ENCODE measurements at regions of chr10 and their contacts with region 1.

Region 1: GRCh38 chr10:120942806-120943413 is 91.7 kb downstream of the WDR11 start:
- DNase-seq: peak; percentile 67
- H3K4me3 ChIP-seq: no peak overlapping the region
- H3K27ac ChIP-seq: no peak overlapping the region
- H3K4me1 ChIP-seq: peaks cover 15% of the 10 kb centered on the region
- H3K27me3 ChIP-seq: no peaks in the 10 kb centered on the region
- CTCF ChIP-seq: peak; percentile 80 to 92

Region 2: DNA sequence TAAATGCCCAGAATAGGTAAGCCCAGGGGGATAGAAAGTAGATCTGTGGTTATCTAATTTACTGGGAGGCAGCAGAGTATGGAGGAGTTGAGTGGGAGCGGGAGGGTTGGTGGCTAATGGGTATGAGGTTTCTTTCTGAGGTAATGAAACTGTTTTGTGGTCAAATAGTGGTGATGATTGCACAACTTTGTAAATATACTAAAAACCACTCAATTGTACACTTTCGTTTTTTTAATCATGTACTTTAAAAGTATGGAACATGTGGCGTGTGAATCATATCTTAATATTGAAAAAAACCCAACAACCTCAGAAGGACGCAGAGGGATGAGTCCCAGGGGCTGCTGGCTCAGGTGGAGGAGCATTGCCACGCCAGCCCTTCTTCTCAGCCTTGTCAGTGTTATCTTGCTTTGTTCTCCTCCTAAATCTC is 26.3 kb after region 1 on chr10:
- CTCF ChIA-PET with region 1: no interaction called
- dilution Hi-C with region 1: no loop called
- in situ Hi-C with region 1: no loop called
- intact Hi-C with region 1: no loop called
- DNase-seq: peak; percentile 88
- H3K4me3 ChIP-seq: no peak overlapping the region
- H3K27ac ChIP-seq: no peak overlapping the region
- H3K4me1 ChIP-seq: peaks cover 14% of the 10 kb centered on the region
- H3K27me3 ChIP-seq: peaks cover 32% of the 10 kb centered on the region
- CTCF ChIP-seq: no peak

Region 3: DNA sequence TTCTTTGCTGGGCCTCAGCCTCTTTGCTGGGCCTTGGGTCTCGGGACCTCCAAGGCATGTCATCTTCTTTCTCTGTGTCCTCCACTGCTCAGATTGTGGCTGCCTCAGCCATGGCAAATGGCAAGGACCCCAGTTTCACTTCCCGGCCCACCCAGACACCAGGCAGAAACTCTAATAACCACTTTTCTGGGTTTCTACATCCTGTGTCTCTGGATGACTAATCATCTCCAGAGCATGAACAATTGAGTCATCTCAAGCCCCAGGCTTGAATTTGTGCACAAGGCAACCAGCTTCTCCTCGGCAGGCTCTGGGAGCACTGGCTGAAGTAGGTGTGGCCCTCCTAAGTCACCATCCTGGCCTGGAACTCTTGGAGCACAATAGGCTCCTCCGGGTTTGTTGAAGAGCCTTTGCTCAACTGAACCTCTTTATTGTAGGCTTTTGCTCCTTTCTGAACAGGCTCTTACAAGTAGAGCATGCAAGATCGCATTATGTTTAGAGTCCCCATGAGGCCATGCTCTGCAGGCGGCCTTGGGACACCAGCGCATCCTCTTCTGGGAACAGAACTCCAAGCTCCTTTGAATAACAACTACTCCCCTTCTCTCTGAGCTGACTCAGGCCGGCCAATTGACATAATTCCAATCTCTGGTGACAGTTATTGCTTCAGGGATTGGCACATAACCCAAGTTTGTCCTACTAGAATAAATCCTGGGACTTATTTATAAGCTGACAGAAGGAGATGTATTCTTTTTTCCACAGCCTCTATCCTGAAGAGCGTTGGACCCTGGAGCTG is 126.3 kb after region 1 on chr10:
- CTCF ChIA-PET with region 1: no interaction called
- dilution Hi-C with region 1: no loop called
- in situ Hi-C with region 1: no loop called
- intact Hi-C with region 1: no loop called
- DNase-seq: peak; percentile 98
- H3K4me3 ChIP-seq: no peak overlapping the region
- H3K27ac ChIP-seq: peak overlapping the region; percentile 86
- H3K4me1 ChIP-seq: peaks cover 20% of the 10 kb centered on the region
- H3K27me3 ChIP-seq: no peaks in the 10 kb centered on the region
- CTCF ChIP-seq: no peak

Region 4: DNA sequence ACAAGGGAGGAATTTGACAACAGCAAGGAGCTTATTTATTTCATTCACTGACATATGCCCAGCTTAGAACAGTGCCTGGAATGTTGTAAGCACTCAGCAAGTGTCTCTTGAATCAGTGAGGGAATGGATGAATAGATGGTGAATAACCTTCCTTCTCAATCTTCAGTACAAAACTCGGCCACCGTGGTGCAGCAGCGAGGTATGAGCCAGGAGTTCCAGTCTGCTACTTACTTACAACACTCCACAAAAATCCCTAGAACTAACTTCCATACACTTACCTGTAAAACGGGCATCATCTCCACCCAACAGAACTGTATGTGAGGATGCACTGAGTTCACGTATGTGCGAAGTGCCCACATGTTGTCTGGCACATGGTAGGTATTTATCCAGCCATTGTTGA is 145.6 kb after region 1 on chr10:
- CTCF ChIA-PET with region 1: no interaction called
- dilution Hi-C with region 1: no loop called
- in situ Hi-C with region 1: no loop called
- intact Hi-C with region 1: loop called (anchors 1 kb)
- DNase-seq: peak; percentile 68
- H3K4me3 ChIP-seq: no peak overlapping the region
- H3K27ac ChIP-seq: no peak overlapping the region
- H3K4me1 ChIP-seq: peaks cover 12% of the 10 kb centered on the region
- H3K27me3 ChIP-seq: no peaks in the 10 kb centered on the region
- CTCF ChIP-seq: peak; percentile 67 to 75

Region 5: GRCh38 chr10:121392657-121393056 is 449.7 kb after region 1 on chr10:
- CTCF ChIA-PET with region 1: no interaction called
- dilution Hi-C with region 1: no loop called
- in situ Hi-C with region 1: no loop called
- intact Hi-C with region 1: loop called (anchors 5 kb)
- DNase-seq: no peak
- H3K4me3 ChIP-seq: peak overlapping the region in 2 of 3 experiments; percentile 13 to 26
- H3K27ac ChIP-seq: no peak overlapping the region
- H3K4me1 ChIP-seq: no peaks in the 10 kb centered on the region
- H3K27me3 ChIP-seq: no peaks in the 10 kb centered on the region
- CTCF ChIP-seq: peak; percentile 8 to 24

Region 6: DNA sequence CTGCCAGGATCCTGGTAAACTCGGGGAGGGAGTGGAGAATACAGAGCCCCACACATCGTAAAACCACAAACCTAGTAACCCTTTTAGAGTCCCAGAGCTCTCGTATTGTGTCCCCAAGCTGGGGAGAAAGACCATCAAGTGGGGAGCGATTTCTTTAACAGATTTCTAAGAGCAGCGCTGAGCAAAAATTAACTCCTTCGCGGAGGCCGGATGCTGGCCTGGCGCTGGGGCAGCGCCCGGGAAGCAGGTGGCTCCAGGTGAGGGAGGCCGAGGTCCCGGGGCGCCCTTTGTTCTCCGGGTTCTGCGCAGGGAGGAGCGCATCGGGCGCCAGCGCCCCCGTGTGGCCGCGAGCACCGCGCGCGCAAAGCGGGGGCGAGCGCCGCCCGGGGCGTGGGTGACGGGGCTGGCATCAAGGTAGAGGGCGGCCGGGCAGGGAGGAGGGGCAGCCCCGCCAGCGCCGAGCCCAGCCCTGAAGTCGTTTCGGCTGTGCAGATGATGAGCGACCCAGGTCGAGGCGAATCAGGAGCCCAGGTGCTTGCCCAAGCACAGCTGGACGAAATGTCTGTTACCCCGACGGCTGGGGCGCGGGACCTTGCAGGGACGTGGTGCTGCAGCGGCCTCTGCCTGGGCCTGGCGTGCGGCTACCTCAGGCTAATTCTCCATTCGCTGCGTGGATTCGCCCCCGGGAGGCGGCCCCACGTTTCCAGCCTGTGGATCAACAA is 665.7 kb after region 1 on chr10:
- CTCF ChIA-PET with region 1: no interaction called
- dilution Hi-C with region 1: no loop called
- in situ Hi-C with region 1: loop called in 1 of 2 experiments (anchors 25 kb)
- intact Hi-C with region 1: loop called (anchors 1 kb)
- DNase-seq: peak; percentile 49
- H3K4me3 ChIP-seq: peak overlapping the region in 2 of 3 experiments; percentile 21 to 33
- H3K27ac ChIP-seq: no peak overlapping the region
- H3K4me1 ChIP-seq: peaks cover 25% of the 10 kb centered on the region
- H3K27me3 ChIP-seq: no peaks in the 10 kb centered on the region
- CTCF ChIP-seq: peak; percentile 61 to 78

Region 7: DNA sequence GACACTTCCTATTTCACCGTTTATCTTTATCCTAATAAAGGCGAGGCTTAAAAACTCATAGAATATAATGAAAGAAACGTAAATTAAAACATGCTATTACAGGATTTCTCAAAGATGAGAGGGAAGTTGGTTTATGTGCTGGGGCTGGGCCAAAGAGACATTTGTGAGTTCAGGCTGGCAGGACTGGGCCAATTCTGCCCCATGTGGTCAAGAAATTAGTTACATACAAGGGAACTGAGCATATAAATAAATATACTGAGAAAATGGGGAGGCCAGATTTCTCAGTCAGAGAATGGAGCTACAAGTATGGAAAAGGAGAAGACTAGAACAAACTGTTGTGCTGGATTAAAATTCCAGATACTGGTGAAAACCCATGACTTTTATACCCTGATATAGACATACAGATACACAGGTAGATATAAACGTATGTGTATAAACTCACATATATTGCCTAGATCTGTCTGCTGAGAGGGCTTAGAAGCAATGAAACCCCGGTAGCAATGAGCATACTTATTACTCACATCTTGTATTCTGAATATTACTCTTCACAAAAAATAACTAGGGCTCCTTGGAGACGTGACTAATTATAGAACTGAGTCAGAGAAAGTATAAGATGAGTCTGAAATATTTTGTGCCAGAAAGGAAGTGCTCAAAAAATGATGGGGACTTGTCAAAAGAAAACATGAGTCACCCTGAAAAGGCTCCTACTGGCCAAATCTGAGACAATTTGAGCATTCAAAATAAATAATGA is 811.0 kb after region 1 on chr10:
- CTCF ChIA-PET with region 1: no interaction called
- dilution Hi-C with region 1: loop called (anchors 25 kb)
- in situ Hi-C with region 1: no loop called
- intact Hi-C with region 1: loop called (anchors 5 kb)
- DNase-seq: peak; percentile 88
- H3K4me3 ChIP-seq: peak overlapping the region in 1 of 3 experiments; percentile 20
- H3K27ac ChIP-seq: peak overlapping the region; percentile 98
- H3K4me1 ChIP-seq: peaks cover 17% of the 10 kb centered on the region
- H3K27me3 ChIP-seq: no peaks in the 10 kb centered on the region
- CTCF ChIP-seq: peak; percentile 38 to 42

Measured in mammary epithelial cell (primary cell).